ENCODE measurements at regions of chr19 and their contacts with region 1.

Region 1: DNA sequence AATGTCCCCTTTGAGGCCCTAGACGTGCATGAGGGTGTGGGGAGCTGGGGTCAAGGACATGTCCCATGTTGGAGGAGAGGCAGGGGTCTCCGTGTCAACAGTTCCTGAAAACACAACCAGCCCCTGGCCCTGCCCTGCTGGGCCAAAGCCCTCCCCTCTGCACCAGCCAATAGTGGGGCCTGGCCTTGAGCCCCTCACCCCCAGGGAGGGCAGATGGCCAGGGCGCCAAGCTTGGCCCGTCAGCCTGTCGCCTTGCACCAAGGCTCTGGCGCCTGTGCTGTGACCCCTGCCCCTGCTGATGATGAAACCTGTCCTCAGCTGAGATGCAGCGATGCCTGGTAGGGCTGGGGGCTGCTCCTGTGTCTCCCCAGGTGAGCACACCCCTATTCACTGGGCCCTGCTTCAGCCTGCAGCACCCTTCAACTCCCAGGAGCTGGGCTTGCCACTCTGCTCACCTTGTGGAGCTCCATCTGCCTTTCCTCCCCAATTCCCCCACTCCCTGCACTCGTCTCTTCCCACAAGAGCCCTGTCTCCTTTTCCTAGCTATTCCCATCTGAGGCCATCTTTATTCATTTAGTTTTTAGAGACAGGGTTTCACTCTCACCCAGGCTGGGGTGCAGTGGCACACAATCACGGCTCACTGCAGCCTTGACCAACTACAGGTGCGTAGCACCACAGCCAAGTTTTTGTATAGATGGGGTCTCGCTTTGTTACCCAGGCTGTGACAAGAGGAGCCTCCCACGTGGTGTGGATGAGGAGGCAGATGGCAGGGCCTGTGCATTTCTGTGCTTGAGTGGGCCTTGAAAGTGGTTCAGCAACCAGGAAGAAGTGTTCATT is 2.1 kb upstream of the HAMP start:
- H3K4me3 Mint-ChIP-seq: no peak overlapping the region
- H3K27ac Mint-ChIP-seq: peak overlapping the region; percentile 87
- H3K4me1 Mint-ChIP-seq: peaks cover 64% of the 10 kb centered on the region
- H3K27me3 Mint-ChIP-seq: peaks cover 24% of the 10 kb centered on the region

Region 2: GRCh38 chr19:35318650-35319448 is 38.6 kb after region 1 on chr19:
- intact Hi-C with region 1: loop called (anchors 5 kb)
- H3K4me3 Mint-ChIP-seq: peak overlapping the region; percentile 49
- H3K27ac Mint-ChIP-seq: peak overlapping the region; percentile 91
- H3K4me1 Mint-ChIP-seq: peaks cover 67% of the 10 kb centered on the region
- H3K27me3 Mint-ChIP-seq: peaks cover 2% of the 10 kb centered on the region

Region 3: DNA sequence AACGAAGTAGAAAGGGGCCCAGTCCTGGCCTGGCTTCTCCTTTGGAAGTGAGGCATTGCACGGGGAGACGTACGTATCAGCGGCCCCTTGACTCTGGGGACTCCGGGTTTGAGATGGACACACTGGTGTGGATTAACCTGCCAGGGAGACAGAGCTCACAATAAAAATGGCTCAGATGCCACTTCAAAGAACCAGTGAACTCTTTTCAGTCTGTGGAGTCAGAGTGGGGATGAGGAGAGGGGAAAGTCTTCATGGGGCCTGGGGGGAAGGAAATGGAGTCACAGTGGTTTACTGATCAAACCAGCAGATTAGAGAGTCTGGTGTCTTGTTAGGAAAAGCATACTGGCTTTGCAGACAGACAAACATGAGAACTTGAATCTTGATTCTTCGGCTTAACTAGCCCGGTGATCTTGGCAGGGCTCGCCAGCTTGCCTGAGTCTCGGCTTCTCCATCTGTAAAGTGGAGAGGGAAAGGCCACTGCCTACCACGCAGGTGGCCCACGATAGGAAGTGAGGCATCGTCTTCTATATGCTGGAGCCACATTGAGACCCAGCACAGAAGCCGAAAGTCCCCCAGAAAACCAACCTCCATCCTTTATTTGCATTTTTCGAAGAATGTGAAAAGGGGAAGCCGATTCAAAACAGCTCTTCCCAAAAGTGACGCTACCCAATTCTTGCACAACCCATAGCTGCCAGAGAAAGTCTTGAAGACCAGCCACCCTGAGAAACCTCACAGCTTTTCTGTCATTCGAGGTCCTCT is 67.1 kb after region 1 on chr19 and contains the start of gene FFAR1:
- intact Hi-C with region 1: loop called (anchors 5 kb)
- H3K4me3 Mint-ChIP-seq: peak within 1 kb of the TSS; percentile 3
- H3K27ac Mint-ChIP-seq: peak within 1 kb of the TSS; percentile 93
- H3K4me1 Mint-ChIP-seq: peaks cover 57% of the 10 kb centered on the region
- H3K27me3 Mint-ChIP-seq: peaks cover 55% of the 10 kb centered on the region

Region 4: DNA sequence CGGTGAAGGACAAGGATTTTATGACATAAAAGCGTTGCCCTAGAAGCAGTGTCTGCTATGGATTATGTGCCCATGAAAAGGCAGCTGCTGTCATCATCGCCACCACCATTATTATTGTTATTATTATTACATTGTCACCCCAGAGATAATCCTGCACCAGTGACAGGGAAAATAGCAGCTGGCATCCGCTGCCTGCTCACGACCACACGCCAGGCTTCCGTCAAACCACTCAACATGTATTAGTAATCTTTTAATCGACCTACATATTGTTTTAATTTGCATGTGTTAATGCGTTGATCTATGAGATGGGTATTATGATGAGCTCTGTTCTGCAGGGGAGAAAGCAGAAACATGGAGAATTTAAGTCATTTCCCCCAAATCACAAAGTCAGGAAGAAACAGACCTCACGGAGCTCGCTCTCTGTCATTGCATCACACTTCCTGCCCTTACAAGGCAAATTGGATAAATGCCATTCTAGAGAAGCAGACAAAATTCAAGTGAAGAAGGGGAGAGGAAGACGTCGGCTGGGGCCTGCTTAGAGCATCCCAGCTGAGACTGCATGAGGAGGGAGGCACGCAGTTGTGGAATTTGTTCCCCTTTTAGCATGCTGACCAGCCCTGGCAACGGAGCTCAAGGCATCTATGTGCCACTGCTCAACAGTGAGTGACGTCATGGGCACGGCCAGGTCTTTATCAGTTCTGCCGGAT is 77.8 kb after region 1 on chr19 and contains the start of gene FFAR3:
- intact Hi-C with region 1: no loop called
- H3K4me3 Mint-ChIP-seq: peak within 1 kb of the TSS; percentile 39
- H3K27ac Mint-ChIP-seq: peak within 1 kb of the TSS; percentile 60
- H3K4me1 Mint-ChIP-seq: peaks cover 28% of the 10 kb centered on the region
- H3K27me3 Mint-ChIP-seq: peaks cover 4% of the 10 kb centered on the region